ENCODE measurements at regions of chr2 and their contacts with region 1.

Region 1: GRCh38 chr2:37231241-37232130 is at the starts of genes CEBPZ and NDUFAF7:
- DNase-seq: peak; percentile 86
- H3K4me3 Mint-ChIP-seq: no peak within 1 kb of the TSS
- H3K27ac Mint-ChIP-seq: no peak within 1 kb of the TSS
- H3K4me1 Mint-ChIP-seq: peaks cover 26% of the 10 kb centered on the region
- H3K27me3 Mint-ChIP-seq: no peaks in the 10 kb centered on the region
- total RNA-seq, gene CEBPZ: 75.4 and 79.2 TPM in 2 replicates
- total RNA-seq, gene NDUFAF7: 23.0 and 27.1 TPM in 2 replicates

Region 2: DNA sequence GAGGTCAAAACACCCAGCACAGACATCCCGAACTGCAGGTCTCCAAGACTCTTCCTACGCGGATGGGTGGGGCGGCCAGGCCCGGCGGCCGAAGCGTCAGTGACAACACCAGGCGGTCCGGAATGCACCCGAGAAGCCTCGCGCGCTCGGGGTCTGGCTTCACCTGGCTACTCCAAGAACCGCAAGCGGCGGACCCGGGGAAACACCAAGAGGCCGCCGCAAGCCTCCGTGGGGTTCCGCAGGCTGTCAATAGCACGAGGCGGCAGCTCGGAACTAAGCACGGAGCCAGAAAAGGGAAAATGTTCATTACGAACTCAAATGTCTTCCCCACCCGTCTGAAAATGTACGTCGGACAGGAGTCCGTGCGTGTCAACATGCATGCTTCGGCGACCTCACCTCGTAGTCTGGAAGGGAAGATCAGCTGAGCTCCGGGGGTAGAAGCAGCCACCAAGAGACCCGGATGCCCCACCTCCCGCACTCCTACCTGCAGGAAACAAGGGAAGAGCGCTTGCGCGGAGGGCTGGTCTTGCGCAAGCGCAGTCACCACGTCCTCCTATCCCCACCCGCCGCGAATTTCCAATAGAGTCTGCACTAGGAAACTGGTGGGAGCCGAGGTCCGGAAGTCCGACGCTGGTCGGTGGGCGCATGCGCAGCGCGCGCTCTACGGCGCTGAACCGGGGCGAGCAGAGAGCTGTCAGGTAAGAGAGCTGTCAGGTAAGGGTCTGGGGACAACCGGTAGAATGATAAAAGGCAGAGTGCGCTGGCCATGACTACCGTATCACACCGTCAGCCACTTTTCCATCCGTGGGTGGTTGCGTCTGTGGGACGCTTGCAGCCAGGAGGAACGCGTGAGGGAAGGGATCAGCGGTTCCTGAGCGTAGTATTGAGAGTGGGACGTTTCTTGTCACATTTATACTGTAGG is 147.4 kb before region 1 on chr2 and contains the starts of genes GPATCH11 and HEATR5B:
- intact Hi-C with region 1: loop called (anchors 1 kb)
- DNase-seq: peak; percentile 92
- H3K4me3 Mint-ChIP-seq: no peak within 1 kb of the TSS
- H3K27ac Mint-ChIP-seq: peak within 1 kb of the TSS; percentile 19
- H3K4me1 Mint-ChIP-seq: peaks cover 26% of the 10 kb centered on the region
- H3K27me3 Mint-ChIP-seq: no peaks in the 10 kb centered on the region
- total RNA-seq, gene GPATCH11: 16.6 and 17.6 TPM in 2 replicates
- total RNA-seq, gene HEATR5B: 15.7 and 16.0 TPM in 2 replicates

Region 3: DNA sequence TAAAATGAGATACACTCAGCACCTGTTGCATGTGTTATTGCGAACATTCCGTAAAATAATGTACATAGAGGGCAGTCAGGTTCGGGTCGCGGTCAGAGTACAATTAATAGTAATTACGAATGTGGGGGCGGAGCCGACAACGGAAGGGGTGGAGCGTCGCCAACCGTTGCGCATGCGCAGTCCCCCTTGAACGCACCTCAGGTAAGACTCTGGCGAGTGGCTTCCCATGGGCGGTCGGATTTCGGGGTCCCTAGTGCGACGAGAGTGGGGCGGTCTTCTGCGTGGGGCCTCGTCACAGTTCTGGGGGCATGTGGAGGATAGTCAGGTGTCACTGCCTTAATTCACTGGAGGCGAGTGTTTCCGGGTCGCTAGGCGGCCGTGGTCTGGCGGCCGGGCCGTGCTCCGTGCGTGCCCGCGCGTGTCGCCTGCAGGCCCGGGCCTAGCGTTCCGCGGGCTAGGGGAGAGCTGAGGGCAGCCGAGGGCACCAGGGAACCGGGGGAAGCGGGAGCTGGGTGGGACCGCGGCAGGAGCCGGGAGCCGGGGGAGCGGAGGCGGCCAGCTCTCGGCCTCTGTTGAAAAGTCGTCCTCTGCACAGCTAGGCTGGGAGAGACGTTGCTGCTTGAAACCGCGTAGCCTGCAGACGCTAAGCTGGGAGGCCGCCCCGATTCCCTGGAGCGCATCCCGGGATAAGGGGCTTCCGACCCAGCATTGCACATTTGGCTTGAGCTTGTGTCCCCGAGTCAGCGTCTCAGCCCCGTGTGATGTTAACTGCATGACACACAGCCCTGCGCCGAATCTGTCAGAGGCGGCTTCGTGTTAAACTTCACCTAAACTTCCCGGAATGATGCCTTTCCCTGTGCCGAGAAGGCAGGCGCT is 34.9 kb before region 1 on chr2 and contains the start of gene CEBPZOS:
- intact Hi-C with region 1: loop called (anchors 1 kb)
- DNase-seq: peak; percentile 80
- H3K4me3 Mint-ChIP-seq: peak within 1 kb of the TSS; percentile 99
- H3K27ac Mint-ChIP-seq: peak within 1 kb of the TSS; percentile 100
- H3K4me1 Mint-ChIP-seq: peaks cover 41% of the 10 kb centered on the region
- H3K27me3 Mint-ChIP-seq: no peaks in the 10 kb centered on the region
- total RNA-seq, gene CEBPZOS: 39.5 and 45.3 TPM in 2 replicates

Region 4: GRCh38 chr2:37324786-37325624 is 93.5 kb after region 1 on chr2 and contains the start of gene PRKD3:
- intact Hi-C with region 1: loop called (anchors 1 kb)
- DNase-seq: peak; percentile 54
- H3K4me3 Mint-ChIP-seq: peak within 1 kb of the TSS; percentile 97
- H3K27ac Mint-ChIP-seq: peak within 1 kb of the TSS; percentile 96
- H3K4me1 Mint-ChIP-seq: peaks cover 37% of the 10 kb centered on the region
- H3K27me3 Mint-ChIP-seq: peaks cover 39% of the 10 kb centered on the region
- total RNA-seq, gene PRKD3: 23.9 and 24.3 TPM in 2 replicates

Region 5: GRCh38 chr2:37389989-37390765 is 158.7 kb after region 1 on chr2:
- intact Hi-C with region 1: loop called (anchors 1 kb)
- DNase-seq: peak; percentile 76
- H3K4me3 Mint-ChIP-seq: peak overlapping the region; percentile 8
- H3K27ac Mint-ChIP-seq: no peak overlapping the region
- H3K4me1 Mint-ChIP-seq: peaks cover 5% of the 10 kb centered on the region
- H3K27me3 Mint-ChIP-seq: peaks cover 15% of the 10 kb centered on the region

Region 6: GRCh38 chr2:37672104-37672869 is 440.8 kb after region 1 on chr2:
- intact Hi-C with region 1: loop called (anchors 1 kb)
- DNase-seq: peak; percentile 59
- H3K4me3 Mint-ChIP-seq: peak overlapping the region; percentile 83
- H3K27ac Mint-ChIP-seq: peak overlapping the region; percentile 67
- H3K4me1 Mint-ChIP-seq: peaks cover 38% of the 10 kb centered on the region
- H3K27me3 Mint-ChIP-seq: peaks cover 8% of the 10 kb centered on the region

Region 7: DNA sequence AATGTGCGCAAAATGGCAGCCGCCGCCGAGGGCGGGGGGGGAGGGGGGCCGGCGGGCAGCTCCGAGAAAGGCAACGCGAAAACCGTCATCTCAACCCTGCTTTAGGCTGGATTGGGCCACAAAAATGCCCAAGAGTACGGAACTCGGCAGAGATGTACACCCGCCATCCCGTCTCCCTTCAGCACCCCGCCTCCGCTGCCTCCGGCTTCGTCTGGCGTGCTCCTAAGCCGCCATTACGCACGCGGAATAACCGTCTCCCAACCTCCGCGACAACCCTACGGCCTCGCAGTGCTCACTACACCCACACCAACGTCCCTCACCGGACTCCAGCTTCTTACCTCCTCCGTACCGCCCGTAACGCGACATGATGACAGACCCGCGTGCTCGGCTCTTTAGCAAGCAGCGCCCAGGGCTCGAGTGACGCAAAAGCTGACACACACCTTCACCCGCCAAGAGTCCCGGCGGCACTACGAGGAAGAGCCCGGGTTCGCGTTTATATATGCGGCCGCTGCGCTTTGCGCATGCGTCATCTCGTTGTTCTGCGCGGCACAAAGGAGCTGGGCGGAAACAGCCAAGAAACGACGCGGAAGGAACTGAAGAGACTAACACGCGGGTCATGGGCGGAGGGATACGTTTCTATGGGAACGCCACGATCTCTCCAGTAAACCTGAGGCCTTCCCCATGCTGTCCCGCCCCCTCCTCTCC is 1519.6 kb after region 1 on chr2 and contains the start of gene SRSF7:
- intact Hi-C with region 1: loop called (anchors 1 kb)
- DNase-seq: peak; percentile 96
- H3K4me3 Mint-ChIP-seq: peak within 1 kb of the TSS; percentile 98
- H3K27ac Mint-ChIP-seq: peak within 1 kb of the TSS; percentile 100
- H3K4me1 Mint-ChIP-seq: peaks cover 54% of the 10 kb centered on the region
- H3K27me3 Mint-ChIP-seq: no peaks in the 10 kb centered on the region
- total RNA-seq, gene SRSF7: 417 and 422 TPM in 2 replicates

Measured in activated T-helper 1 cell treated with anti-CD3 and anti-CD28 coated beads, Interleukin-12 subunit alpha, Interleukin-12 subunit beta, Interleukin-2, Interleukin-4 antibody, amounts not matched to agents 30 ng/mL and 10 ng/mL and 1 ng/mL, durations not matched to agents 14 hours and 24 hours and 36 hours (primary cell).